A673 (cell line): ENCODE measurements at regions of chr11 and their contacts with region 1.

Region 1: DNA sequence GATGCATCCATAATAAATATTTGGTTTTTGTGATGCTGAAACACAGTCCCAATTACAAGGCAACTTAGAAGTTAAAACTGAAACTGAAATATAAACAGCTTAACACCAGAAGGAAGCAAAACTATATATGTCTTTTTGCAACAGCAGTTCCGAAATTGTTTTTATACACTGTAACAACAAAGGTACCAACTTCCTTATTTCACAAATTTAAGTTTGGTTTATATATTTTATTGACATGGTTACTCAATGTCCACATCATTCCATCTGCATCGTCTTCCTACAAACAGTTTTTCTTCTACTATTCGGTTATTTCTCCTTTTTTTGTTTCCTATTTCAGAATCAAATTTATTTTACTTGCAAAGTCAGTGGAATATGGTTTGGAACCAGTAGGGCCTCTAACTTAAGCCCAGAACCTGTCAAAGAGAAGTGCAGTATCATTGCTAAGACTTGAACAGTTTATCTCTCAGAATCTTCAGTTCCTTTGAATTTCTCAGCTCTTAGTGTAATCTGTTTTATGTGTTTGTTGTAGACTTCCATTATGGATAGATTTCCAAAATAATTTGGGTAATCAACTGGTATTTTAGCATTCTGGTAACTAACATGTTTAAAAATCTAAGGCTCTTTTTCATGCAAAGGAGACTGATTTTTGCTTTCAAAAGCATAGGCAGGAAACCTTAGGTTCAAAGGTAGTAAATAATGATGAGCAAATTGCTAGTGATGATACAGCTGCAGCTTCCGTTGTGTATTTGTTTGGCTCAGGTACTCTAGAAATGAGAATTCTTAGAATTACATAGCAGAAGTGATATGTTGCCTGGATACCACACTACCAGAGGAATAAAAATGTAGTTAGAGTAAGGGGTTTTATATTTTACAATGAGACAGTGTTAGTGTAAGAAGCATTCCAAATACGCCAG is 8.2 kb upstream of the HSPA8 start:
- DNase-seq: no peak
- H3K4me3 ChIP-seq: no peak overlapping the region
- H3K27ac ChIP-seq: no peak overlapping the region
- H3K4me1 ChIP-seq: peaks cover 13% of the 10 kb centered on the region
- H3K27me3 ChIP-seq: no peaks in the 10 kb centered on the region
- CTCF ChIP-seq: no peak

Region 2: DNA sequence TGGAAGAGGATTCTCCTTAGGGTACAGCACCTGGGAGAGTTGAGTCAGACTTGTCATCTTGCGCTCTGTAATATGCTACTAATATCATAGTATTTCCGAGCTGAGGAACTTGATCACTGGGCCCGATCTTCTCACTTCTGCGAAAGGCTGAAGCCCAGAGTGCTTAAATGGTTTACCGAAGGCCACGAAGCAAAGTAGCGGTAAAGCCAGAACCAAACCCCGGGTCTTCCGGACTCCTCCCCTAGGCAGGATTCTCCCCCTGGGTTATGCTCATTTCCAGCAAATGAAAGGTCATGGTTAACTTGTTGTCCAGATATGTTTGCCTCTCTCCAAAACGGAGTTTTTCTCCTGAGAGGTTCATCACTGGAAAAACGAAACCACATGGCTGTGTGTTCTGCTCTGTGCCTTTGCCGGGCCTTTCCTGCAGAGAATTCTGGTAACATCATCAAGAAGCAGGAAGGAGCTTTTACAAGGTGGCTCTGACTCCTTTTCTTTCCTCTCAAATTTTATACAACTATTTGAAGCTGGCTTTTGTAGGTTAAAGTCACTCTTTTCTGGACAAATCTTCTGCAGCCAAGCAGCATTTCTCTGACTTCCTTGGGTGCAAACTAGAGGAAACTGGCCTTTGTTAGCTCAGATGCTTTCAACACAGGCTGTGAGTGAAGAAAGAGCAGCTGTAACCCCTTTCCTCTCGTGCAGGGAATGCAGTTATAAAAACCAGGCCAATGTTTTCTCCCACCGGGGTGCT is 379.2 kb before region 1 on chr11:
- CTCF ChIA-PET with region 1: no interaction called
- POLR2A ChIA-PET with region 1: no interaction called
- intact Hi-C with region 1: no loop called
- DNase-seq: peak; percentile 27
- H3K4me3 ChIP-seq: no peak overlapping the region
- H3K27ac ChIP-seq: peak overlapping the region; percentile 64
- H3K4me1 ChIP-seq: peaks cover 17% of the 10 kb centered on the region
- H3K27me3 ChIP-seq: no peaks in the 10 kb centered on the region
- CTCF ChIP-seq: no peak

Region 3: DNA sequence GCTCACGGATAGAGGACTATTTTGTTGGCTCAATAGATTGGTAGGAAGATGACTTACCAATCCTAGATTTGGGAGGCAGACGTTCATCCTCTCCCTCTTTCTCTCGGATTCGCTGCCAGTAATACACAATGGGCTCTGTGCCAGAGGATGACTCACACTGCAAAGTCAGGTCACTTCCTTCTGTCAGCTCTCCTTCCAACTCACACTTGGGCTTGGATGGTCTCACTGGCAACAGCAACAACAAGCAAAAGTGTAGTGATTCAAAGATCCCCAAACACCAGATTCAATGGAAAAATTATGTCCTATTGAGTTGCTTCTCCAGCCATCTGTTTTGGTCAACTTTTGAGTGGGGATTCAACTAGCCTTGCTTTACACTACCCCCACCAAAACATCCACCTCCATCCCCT is 13.5 kb after region 1 on chr11:
- CTCF ChIA-PET with region 1: no interaction called
- POLR2A ChIA-PET with region 1: no interaction called
- intact Hi-C with region 1: loop called (anchors 2 kb)
- DNase-seq: peak; percentile 95
- H3K4me3 ChIP-seq: no peak overlapping the region
- H3K27ac ChIP-seq: peak overlapping the region; percentile 31
- H3K4me1 ChIP-seq: peaks cover 12% of the 10 kb centered on the region
- H3K27me3 ChIP-seq: no peaks in the 10 kb centered on the region
- CTCF ChIP-seq: no peak